ENCODE measurements at regions of chr14 and their contacts with region 1.

Region 1: DNA sequence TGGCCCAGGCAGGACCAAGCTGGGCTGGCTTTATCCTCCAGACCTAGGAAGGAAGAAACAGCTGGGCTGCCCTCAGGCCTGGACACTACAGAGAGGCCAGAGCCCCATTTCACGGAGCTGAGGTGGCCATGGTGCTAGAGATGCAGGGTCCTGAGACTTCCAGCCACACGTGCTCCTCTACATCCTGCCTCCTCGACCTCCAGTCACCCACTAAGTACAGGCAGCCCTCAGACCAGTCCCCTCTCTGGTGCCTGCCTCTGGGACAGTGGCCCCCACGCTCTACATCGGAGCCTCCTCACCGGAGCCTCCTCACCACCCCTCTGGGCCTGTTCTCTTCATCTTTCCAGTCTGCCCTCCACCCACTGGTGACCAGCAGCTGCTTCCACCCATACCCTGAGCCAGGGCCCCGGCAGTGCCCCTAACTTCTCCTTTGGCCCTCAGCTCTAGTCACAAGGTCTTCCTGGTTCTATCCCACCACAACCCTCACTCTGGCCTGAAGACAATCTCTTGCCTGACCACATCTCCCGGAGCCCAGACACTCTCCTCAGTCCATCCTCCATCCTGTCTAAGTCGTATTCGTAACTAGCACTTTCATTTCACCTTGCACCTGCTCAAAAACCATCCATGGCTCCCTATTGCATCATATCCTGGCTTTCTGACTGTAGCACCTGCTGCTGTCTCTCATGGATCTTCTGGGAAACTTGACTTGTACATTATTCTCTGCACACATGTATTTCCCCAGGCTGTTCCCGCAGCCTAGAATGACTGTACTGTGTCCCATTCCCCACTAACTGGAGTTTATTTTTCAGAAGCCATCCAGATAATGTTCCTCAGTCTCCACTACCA is 43.9 kb downstream of the DIO3 start:
- DNase-seq: no peak
- ATAC-seq: no peak
- H3K4me3 ChIP-seq: no peak overlapping the region
- H3K27ac ChIP-seq: no peak overlapping the region
- H3K4me1 ChIP-seq: no peaks in the 10 kb centered on the region
- H3K27me3 ChIP-seq: peaks cover 0 to 53% (median 36%) of the 10 kb centered on the region in 7 donors
- CTCF ChIP-seq: no peak

Region 2: DNA sequence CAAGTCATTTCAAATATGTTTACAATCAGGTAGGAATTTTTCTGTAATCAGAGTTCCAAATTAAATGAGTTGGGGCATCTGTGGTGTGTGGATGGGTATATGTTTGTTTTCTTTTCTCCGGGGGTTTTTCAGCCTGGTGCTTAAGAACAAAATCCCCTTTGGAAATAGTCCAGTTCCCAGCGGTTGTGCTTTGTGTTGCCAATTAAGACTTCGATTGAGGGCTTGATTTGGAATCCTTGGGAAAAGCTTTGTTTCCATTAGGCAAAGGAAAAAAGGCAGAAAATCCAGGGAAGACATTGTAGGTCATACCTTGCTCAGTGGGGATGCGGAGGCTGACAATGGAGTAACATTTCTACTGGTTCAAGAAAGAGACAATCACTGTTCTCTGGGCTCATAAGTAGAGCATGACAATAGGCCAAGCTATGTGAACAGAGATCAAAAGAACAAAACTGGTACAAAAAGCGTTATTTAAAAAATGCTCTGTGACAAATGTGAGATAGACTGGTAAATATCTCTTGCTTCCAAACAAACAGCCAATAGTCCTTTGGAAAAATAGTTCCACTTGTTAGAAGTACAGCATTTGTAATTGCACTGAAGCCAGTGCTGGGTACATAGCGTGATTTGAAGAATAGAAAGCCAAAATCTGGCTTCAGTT is 1732.2 kb before region 1 on chr14:
- intact Hi-C with region 1: loop called in 1 of 10 experiments (anchors 5 kb)
- DNase-seq: no peak
- ATAC-seq: no peak
- H3K4me3 ChIP-seq: no peak overlapping the region
- H3K27ac ChIP-seq: no peak overlapping the region
- H3K4me1 ChIP-seq: peaks cover 0 to 45% (median 10%) of the 10 kb centered on the region in 9 donors
- H3K27me3 ChIP-seq: no peaks in the 10 kb centered on the region
- CTCF ChIP-seq: no peak

Region 3: GRCh38 chr14:101408077-101408896 is 196.9 kb before region 1 on chr14:
- intact Hi-C with region 1: no loop called
- DNase-seq: no peak
- ATAC-seq: peak in 1 of 8 donors; percentile 29
- H3K4me3 ChIP-seq: no peak overlapping the region
- H3K27ac ChIP-seq: no peak overlapping the region
- H3K4me1 ChIP-seq: peaks cover 0 to 5% (median 0%) of the 10 kb centered on the region in 9 donors
- H3K27me3 ChIP-seq: peaks cover 0 to 17% (median 5%) of the 10 kb centered on the region in 7 donors
- CTCF ChIP-seq: no peak

Region 4: DNA sequence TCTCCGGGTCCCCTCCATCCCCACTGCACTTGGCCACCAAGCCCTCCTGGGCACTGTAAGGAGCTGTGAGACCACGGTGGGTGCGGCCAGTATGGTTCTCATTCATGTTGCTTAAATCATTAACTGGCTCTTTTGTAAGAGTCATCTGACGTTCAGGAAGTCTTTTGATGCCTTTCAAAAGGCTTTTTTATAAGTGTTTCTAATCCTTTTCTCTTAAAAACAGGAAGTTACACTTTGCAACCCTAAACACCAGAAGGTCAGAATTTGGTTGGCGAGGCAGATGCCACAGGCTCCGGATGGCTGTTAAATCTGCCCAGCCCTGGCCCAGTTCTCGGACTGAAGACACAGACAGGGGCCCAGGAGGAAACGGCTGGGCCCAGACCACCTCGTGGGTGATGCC is 69.9 kb before region 1 on chr14:
- intact Hi-C with region 1: no loop called
- DNase-seq: no peak
- ATAC-seq: no peak
- H3K4me3 ChIP-seq: no peak overlapping the region
- H3K27ac ChIP-seq: peak overlapping the region in 1 of 10 donors; percentile 44
- H3K4me1 ChIP-seq: peaks cover 0 to 12% (median 0%) of the 10 kb centered on the region in 9 donors
- H3K27me3 ChIP-seq: peaks cover 0 to 48% (median 9%) of the 10 kb centered on the region in 7 donors
- CTCF ChIP-seq: no peak

Measured in heart right ventricle (tissue), 16 donors.